IMR-90 (cell line): ENCODE measurements at regions of chr12 and their contacts with region 1.

Region 1: GRCh38 chr12:124745891-124746570 is 117.6 kb downstream of the SCARB1 start:
- DNase-seq: peak; percentile 81
- ATAC-seq: peak; percentile 94
- H3K4me3 ChIP-seq: no peak overlapping the region
- H3K27ac ChIP-seq: peak overlapping the region; percentile 79
- H3K4me1 ChIP-seq: peaks cover 19% of the 10 kb centered on the region
- H3K27me3 ChIP-seq: no peaks in the 10 kb centered on the region
- CTCF ChIP-seq: no peak
- POLR2A ChIP-seq: no peak
- RAD21 ChIP-seq: no peak

Region 2: GRCh38 chr12:124518051-124518932 is 227.7 kb before region 1 on chr12:
- CTCF ChIA-PET with region 1: interaction called, 4 read pairs
- POLR2A ChIA-PET with region 1: no interaction called
- dilution Hi-C with region 1: no loop called
- in situ Hi-C with region 1: no loop called
- intact Hi-C with region 1: loop called (anchors 5 kb)
- DNase-seq: peak; percentile 99
- ATAC-seq: peak; percentile 78
- H3K4me3 ChIP-seq: peak overlapping the region; percentile 19
- H3K27ac ChIP-seq: peak overlapping the region; percentile 85
- H3K4me1 ChIP-seq: peaks cover 37% of the 10 kb centered on the region
- H3K27me3 ChIP-seq: no peaks in the 10 kb centered on the region
- CTCF ChIP-seq: no peak
- POLR2A ChIP-seq: no peak; the same call in 1 of the 2 replicates
- RAD21 ChIP-seq: peak; percentile 20; the same call in 1 of the 2 replicates

Region 3: DNA sequence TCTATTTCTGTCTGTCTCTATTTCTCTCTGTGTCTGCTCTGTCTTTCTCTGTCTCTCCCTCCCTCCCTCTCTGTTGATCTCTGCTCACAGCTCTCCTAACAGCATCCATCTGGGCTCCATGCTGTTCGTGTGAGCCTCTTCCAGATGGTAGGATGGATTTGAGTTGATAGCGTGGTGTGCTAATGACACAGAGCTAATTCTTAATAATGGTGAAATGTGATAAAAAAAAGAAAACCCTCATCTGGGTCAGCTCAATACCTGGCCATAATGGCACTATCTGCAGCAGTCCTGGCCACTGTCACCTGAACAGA is 415.6 kb after region 1 on chr12:
- CTCF ChIA-PET with region 1: no interaction called
- POLR2A ChIA-PET with region 1: no interaction called
- dilution Hi-C with region 1: no loop called
- in situ Hi-C with region 1: no loop called
- intact Hi-C with region 1: no loop called
- DNase-seq: no peak
- ATAC-seq: no peak
- H3K4me3 ChIP-seq: no peak overlapping the region
- H3K27ac ChIP-seq: no peak overlapping the region
- H3K4me1 ChIP-seq: no peaks in the 10 kb centered on the region
- H3K27me3 ChIP-seq: no peaks in the 10 kb centered on the region
- CTCF ChIP-seq: no peak
- POLR2A ChIP-seq: no peak
- RAD21 ChIP-seq: no peak